Esophagus squamous epithelium (tissue), 5 donors: ENCODE measurements at regions of chrX and their contacts with region 1.

Region 1: GRCh38 chrX:70096052-70096451 is 33.8 kb downstream of the OTUD6A start:
- DNase-seq: no peak
- H3K4me3 ChIP-seq: no peak overlapping the region
- H3K27ac ChIP-seq: no peak overlapping the region
- H3K4me1 ChIP-seq: no peaks in the 10 kb centered on the region
- H3K27me3 ChIP-seq: no peaks in the 10 kb centered on the region
- CTCF ChIP-seq: peak in 1 of 6 experiments; percentile 12
- POLR2A ChIP-seq: no peak

Region 2: DNA sequence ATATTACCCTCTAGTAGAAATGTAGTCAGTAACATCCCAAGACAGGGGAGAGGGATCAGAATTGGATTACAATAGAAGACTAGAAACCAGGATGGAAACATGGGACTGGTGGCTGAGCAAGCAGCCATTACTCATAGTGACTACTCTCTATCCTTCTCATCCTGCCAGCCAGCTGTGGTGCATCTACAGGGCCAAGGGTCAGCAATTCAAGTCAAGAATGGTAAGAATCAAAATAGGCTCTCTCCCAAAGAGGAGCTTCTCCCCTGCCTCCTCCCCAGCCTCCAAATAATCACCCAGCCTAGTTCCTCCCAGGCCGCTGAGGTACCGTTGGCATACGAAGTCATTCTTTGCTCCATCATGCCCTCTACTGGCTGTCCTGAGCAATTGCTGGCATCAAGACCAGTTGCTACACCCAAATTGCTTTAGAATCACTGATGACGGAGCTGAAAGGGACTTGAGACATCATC is 65.7 kb before region 1 on chrX:
- intact Hi-C with region 1: loop called (anchors 10 kb)
- DNase-seq: no peak
- H3K4me3 ChIP-seq: no peak overlapping the region
- H3K27ac ChIP-seq: no peak overlapping the region
- H3K4me1 ChIP-seq: peaks cover 0 to 4% (median 0%) of the 10 kb centered on the region in 3 donors
- H3K27me3 ChIP-seq: no peaks in the 10 kb centered on the region
- CTCF ChIP-seq: peak in 5 of 6 experiments; percentile 43 to 64 (median 57)
- POLR2A ChIP-seq: no peak